Testis (tissue), 5 donors: ENCODE measurements at regions of chr16 and their contacts with region 1.

Region 1: GRCh38 chr16:86519649-86520316 is 9.5 kb downstream of the FOXF1 start:
- DNase-seq: peak; percentile 76
- H3K4me3 ChIP-seq: no peak overlapping the region
- H3K27ac ChIP-seq: no peak overlapping the region
- H3K4me1 ChIP-seq: no peaks in the 10 kb centered on the region
- H3K27me3 ChIP-seq: no peaks in the 10 kb centered on the region
- CTCF ChIP-seq: peak; percentile 74 to 87 (median 83)
- POLR2A ChIP-seq: no peak

Region 2: GRCh38 chr16:86072328-86073102 is 447.3 kb before region 1 on chr16:
- intact Hi-C with region 1: loop called (anchors 5 kb)
- DNase-seq: peak; percentile 83
- H3K4me3 ChIP-seq: no peak overlapping the region
- H3K27ac ChIP-seq: no peak overlapping the region
- H3K4me1 ChIP-seq: no peaks in the 10 kb centered on the region
- H3K27me3 ChIP-seq: no peaks in the 10 kb centered on the region
- CTCF ChIP-seq: peak; percentile 47 to 80 (median 79)
- POLR2A ChIP-seq: no peak

Region 3: GRCh38 chr16:86343027-86343787 is 176.6 kb before region 1 on chr16:
- intact Hi-C with region 1: loop called (anchors 5 kb)
- DNase-seq: no peak
- H3K4me3 ChIP-seq: no peak overlapping the region
- H3K27ac ChIP-seq: no peak overlapping the region
- H3K4me1 ChIP-seq: no peaks in the 10 kb centered on the region
- H3K27me3 ChIP-seq: no peaks in the 10 kb centered on the region
- CTCF ChIP-seq: no peak
- POLR2A ChIP-seq: no peak

Region 4: DNA sequence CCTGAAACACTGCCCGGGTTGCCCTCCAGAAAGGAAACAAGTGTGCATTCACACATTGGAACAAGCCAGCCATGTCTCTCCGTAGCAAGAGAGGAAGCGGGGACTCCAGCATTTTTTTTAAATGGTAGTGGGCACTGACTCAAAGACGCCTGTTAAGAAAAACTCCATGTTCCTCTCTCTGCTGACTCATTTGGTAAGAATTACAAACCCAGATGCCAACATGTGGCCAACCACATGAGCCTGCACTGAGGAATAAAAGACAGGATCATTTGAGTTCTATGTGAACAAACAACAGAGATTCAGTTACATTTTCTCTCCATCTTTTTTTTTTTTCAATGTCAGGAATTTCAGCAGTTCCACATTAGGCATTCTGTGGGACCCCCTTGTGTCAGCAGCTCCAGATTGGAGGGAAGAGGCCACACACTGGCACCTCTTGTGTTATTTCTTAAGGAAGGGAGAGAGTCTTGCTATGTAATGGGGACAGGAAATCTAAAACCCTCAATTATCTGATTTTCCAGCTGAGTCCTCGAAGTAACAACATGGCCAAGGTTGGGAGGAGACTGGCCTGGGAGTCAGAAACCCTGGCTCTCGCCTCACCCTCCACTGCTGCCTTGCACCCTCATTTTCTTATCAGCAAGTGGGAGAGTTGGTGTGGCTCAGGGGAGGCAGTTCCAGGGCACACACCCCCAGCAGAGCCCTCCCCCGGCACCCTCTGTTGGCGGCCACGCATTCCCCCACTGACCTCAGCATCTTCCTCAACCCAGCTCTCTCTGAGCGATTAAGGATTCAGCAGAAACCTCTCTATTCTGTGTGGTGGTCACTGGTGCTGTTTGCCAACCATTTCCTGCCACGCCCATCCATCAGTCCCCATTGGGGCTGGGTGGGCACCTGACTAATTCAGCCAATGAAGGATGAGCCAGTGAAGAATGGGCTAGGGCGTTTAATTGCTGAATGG is 231.6 kb after region 1 on chr16:
- intact Hi-C with region 1: no loop called
- DNase-seq: no peak
- H3K4me3 ChIP-seq: no peak overlapping the region
- H3K27ac ChIP-seq: no peak overlapping the region
- H3K4me1 ChIP-seq: no peaks in the 10 kb centered on the region
- H3K27me3 ChIP-seq: no peaks in the 10 kb centered on the region
- CTCF ChIP-seq: no peak
- POLR2A ChIP-seq: no peak